BJ (cell line): ENCODE measurements at regions of chrX and their contacts with region 1.

Region 1: GRCh38 chrX:18906286-18906685 is 77.6 kb downstream of the PHKA2 start:
- DNase-seq: no peak
- H3K4me3 ChIP-seq: no peak overlapping the region
- H3K27me3 ChIP-seq: no peaks in the 10 kb centered on the region
- CTCF ChIP-seq: no peak

Region 2: GRCh38 chrX:19214311-19214710 is 308.0 kb after region 1 on chrX:
- CTCF ChIA-PET with region 1: no interaction called
- POLR2A ChIA-PET with region 1: interaction called, 12 read pairs
- DNase-seq: no peak
- H3K4me3 ChIP-seq: no peak overlapping the region
- H3K27me3 ChIP-seq: no peaks in the 10 kb centered on the region
- CTCF ChIP-seq: no peak